Natural killer cell (primary cell): ENCODE measurements at regions of chr5 and their contacts with region 1.

Region 1: GRCh38 chr5:172283020-172283861 is at the start of gene UBTD2:
- DNase-seq: peak; percentile 72 to 82
- ATAC-seq: peak; percentile 86 to 93 (median 88)
- H3K4me3 ChIP-seq: peak within 1 kb of the TSS; percentile 66
- H3K4me3 Mint-ChIP-seq: peak within 1 kb of the TSS; percentile 93
- H3K27ac ChIP-seq: no peak within 1 kb of the TSS
- H3K27ac Mint-ChIP-seq: peak within 1 kb of the TSS; percentile 64 to 76
- H3K4me1 ChIP-seq: peaks cover 11% of the 10 kb centered on the region
- H3K4me1 Mint-ChIP-seq: peaks cover 17 to 18% of the 10 kb centered on the region in 2 donors
- H3K27me3 ChIP-seq: no peaks in the 10 kb centered on the region
- H3K27me3 Mint-ChIP-seq: no peaks in the 10 kb centered on the region
- CTCF ChIP-seq: peak; percentile 49
- total RNA-seq, gene UBTD2: 1.7 to 3.3 (median 2.6) TPM

Region 2: DNA sequence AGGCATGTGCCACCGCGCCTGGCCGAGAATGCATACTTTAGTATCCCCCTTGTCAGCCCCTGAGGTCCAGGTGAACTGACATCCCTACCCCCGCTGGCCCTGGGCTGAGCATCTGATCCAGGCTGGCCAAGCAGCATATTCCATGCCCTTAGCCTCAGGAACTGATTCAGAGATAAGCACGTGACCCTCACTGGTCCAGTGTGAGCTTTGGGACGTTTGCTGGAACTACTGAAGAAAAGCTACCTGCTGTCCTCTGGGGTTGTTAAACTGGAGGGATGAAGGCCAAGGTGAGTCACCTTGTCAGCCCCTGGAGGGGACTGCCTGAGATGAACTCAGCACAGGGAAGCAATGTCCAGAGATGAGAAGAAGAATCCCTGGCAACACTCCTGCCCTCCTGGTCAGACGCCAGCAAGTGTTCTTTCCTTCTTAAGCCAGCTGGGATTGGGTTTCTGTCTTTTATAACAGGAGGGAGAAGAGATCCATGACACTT is 217.7 kb before region 1 on chr5:
- intact Hi-C with region 1: loop called (anchors 5 kb)
- DNase-seq: no peak
- ATAC-seq: no peak
- H3K4me3 ChIP-seq: no peak overlapping the region
- H3K4me3 Mint-ChIP-seq: peak overlapping the region; percentile 82
- H3K27ac ChIP-seq: peak overlapping the region; percentile 65
- H3K27ac Mint-ChIP-seq: peak overlapping the region; percentile 92 to 94
- H3K4me1 ChIP-seq: peaks cover 36% of the 10 kb centered on the region
- H3K4me1 Mint-ChIP-seq: peaks cover 60 to 62% of the 10 kb centered on the region in 2 donors
- H3K27me3 ChIP-seq: no peaks in the 10 kb centered on the region
- H3K27me3 Mint-ChIP-seq: no peaks in the 10 kb centered on the region
- CTCF ChIP-seq: no peak

Region 3: DNA sequence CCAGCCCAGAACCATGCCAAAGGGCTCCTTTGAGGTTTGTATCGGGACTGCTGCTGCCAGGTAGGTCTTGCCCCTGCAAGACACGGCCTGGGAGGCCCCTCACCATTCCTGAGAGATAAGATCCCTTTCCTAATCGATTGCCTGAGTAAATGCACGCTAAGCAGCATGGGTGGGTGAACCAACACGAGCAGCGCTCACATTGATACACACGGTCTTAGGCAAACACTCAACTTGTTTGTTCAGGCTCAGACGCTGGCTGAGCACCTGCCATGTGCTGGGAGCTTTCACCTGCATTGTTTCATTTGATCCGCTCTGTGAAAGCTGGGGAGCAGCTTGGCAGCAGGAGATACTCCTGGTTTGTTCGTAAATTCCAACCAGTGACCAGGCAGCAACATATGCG is 280.9 kb after region 1 on chr5:
- intact Hi-C with region 1: no loop called
- DNase-seq: no peak
- ATAC-seq: no peak
- H3K4me3 ChIP-seq: no peak overlapping the region
- H3K4me3 Mint-ChIP-seq: no peak overlapping the region
- H3K27ac ChIP-seq: no peak overlapping the region
- H3K27ac Mint-ChIP-seq: no peak overlapping the region
- H3K4me1 ChIP-seq: no peaks in the 10 kb centered on the region
- H3K4me1 Mint-ChIP-seq: no peaks in the 10 kb centered on the region
- H3K27me3 ChIP-seq: no peaks in the 10 kb centered on the region
- H3K27me3 Mint-ChIP-seq: peaks cover 4 to 10% of the 10 kb centered on the region in 2 donors
- CTCF ChIP-seq: no peak